HEK293 (cell line): ENCODE measurements at regions of chr5 and their contacts with region 1.

Region 1: GRCh38 chr5:168987543-168988300 is 313.2 kb downstream of the SLIT3 start:
- H3K4me3 ChIP-seq: no peak overlapping the region
- H3K27ac ChIP-seq: no peak overlapping the region
- H3K4me1 ChIP-seq: no peaks in the 10 kb centered on the region; the same call in 1 of the 2 replicates
- CTCF ChIP-seq: peak; percentile 68

Region 2: GRCh38 chr5:168947212-168947868 is 40.4 kb before region 1 on chr5:
- CTCF ChIA-PET with region 1: interaction called, 12 read pairs
- POLR2A ChIA-PET with region 1: no interaction called
- H3K4me3 ChIP-seq: no peak overlapping the region
- H3K27ac ChIP-seq: no peak overlapping the region
- H3K4me1 ChIP-seq: no peaks in the 10 kb centered on the region
- CTCF ChIP-seq: peak; percentile 39; the same call in 1 of the 2 replicates

Region 3: GRCh38 chr5:169001394-169001793 is 13.7 kb after region 1 on chr5:
- CTCF ChIA-PET with region 1: interaction called, 11 read pairs
- POLR2A ChIA-PET with region 1: interaction called, 4 read pairs
- H3K4me3 ChIP-seq: no peak overlapping the region
- H3K27ac ChIP-seq: no peak overlapping the region
- H3K4me1 ChIP-seq: no peaks in the 10 kb centered on the region; the same call in 1 of the 2 replicates
- CTCF ChIP-seq: no peak

Region 4: GRCh38 chr5:169302491-169303118 is 314.9 kb after region 1 on chr5:
- CTCF ChIA-PET with region 1: interaction called, 25 read pairs
- POLR2A ChIA-PET with region 1: no interaction called
- H3K4me3 ChIP-seq: no peak overlapping the region
- H3K27ac ChIP-seq: no peak overlapping the region
- H3K4me1 ChIP-seq: peaks cover 5% of the 10 kb centered on the region; the same call in 1 of the 2 replicates
- CTCF ChIP-seq: peak; percentile 73

Region 5: GRCh38 chr5:169548315-169548714 is 560.6 kb after region 1 on chr5:
- CTCF ChIA-PET with region 1: interaction called, 38 read pairs
- POLR2A ChIA-PET with region 1: no interaction called
- H3K4me3 ChIP-seq: no peak overlapping the region
- H3K27ac ChIP-seq: no peak overlapping the region
- H3K4me1 ChIP-seq: no peaks in the 10 kb centered on the region
- CTCF ChIP-seq: peak; percentile 55

Region 6: DNA sequence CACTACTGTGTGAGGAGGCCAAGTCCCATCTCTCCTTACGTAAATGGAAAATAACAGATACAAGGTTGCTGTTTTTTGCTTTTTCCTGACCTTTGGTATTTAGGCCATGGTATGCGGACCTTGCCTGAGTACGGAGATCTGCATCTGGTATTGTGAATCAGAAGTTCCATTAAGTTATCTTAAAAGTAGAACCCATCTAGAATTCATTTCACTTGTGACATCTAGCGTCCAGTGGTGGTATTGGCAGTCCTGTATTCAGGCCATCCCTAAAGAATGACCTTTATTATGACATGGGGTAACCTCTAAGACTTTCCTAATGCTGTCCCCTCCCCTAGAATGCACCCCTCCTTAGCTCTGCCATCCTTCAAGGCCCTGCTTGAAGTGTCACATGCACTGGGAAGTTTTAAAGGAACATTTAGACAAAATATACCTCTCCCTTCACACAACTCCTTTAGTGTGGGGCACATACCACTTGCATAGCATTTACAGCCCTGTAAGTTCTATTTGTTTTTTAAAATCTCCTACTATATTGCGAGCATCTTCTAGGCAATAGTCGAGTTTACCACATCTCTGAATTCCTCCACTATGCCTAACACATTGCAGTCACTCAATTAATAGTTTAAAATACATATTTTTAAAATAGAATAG is 594.0 kb after region 1 on chr5:
- CTCF ChIA-PET with region 1: interaction called, 25 read pairs
- POLR2A ChIA-PET with region 1: no interaction called
- H3K4me3 ChIP-seq: no peak overlapping the region
- H3K27ac ChIP-seq: no peak overlapping the region
- H3K4me1 ChIP-seq: peaks cover 4% of the 10 kb centered on the region; the same call in 1 of the 2 replicates
- CTCF ChIP-seq: no peak